HepG2 (cell line): ENCODE measurements at regions of chr17 and their contacts with region 1.

Region 1: DNA sequence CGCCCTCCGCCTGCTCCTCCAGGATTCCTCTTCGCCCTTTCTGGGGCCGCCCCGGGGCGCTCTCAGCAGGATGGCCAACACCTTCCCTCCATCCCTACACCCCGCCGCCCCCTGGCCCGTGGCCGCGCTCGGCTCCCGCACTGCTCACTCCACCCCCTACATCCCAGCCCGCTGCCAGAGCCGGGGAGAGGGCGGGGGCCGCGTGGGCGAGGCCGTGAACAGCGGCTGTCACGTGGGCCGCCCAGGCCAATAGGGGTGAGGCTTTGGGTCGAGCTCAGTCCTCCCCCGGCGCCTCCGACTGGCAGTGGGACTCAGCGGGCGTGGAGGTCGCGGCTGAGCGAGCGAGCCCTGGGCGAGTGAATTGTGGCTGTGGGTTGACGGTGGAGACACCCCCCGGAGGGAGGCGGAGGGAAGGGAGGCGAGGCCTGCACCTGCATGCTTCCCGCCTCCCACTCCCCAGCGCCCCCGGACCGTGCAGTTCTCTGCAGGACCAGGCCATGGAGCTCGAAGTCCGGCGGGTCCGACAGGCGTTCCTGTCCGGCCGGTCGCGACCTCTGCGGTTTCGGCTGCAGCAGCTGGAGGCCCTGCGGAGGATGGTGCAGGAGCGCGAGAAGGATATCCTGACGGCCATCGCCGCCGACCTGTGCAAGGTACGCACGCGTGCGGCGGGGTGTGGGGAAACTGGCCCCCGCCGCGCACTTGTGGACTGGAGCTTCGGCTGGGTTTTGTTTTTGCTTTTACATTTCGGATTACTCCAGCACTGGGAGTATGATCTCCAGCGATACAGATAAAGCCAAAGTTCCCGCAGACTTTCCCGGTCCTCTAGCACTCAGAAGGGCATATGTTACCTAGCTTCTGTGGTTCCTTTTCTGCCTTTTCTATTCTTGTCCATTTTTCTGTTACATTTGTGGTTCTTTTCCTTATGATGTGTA is at the start of gene ALDH3A2:
- DNase-seq: peak; percentile 95
- ATAC-seq: peak; percentile 94
- H3K4me3 ChIP-seq: peak within 1 kb of the TSS; percentile 86 to 89 (median 86)
- H3K27ac ChIP-seq: peak within 1 kb of the TSS; percentile 88
- H3K4me1 ChIP-seq: peaks cover 71% of the 10 kb centered on the region
- H3K27me3 ChIP-seq: no peaks in the 10 kb centered on the region; a peak in 1 of 5 replicates
- CTCF ChIP-seq: peak; percentile 82
- EP300 ChIP-seq: peak; percentile 59 to 88; a peak in 3 of 4 replicates
- POLR2A ChIP-seq: peak; percentile 48 to 94; a peak in 3 of 4 replicates
- RAD21 ChIP-seq: peak; percentile 94
- total RNA-seq, gene ALDH3A2: 180 and 245 TPM in 2 replicates

Region 2: DNA sequence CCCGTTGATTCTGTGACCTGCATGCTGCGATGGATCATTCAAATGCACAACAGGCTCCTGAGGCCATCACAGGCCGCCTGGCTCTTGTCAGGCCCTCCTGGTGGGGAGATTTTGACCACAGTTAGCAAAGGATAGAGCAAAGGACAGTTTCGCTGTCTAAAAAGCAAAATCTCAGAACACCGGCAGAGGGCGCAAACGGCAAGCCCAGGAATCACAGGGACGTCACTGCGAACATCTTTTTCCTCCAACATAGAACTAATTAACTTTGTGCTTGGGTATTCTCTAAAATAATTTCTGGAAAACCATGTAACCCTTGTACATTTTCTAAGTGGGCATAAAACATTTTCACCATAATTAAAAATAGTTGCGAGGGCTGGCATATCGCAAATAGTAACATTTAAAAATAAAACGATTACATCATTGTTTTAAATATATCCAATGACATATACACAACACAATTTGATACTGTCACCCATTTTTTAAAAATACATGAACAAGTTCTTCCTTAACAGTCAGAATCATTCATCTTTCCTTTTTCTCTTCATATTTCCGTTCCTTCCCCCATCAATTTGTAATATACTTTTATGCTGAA is 134.7 kb before region 1 on chr17:
- CTCF ChIA-PET with region 1: no interaction called
- POLR2A ChIA-PET with region 1: interaction called, 7 read pairs
- in situ Hi-C with region 1: no loop called
- intact Hi-C with region 1: loop called (anchors 2 kb)
- DNase-seq: peak; percentile 68
- ATAC-seq: peak; percentile 87
- H3K4me3 ChIP-seq: no peak overlapping the region
- H3K27ac ChIP-seq: no peak overlapping the region
- H3K4me1 ChIP-seq: peaks cover 58% of the 10 kb centered on the region
- H3K27me3 ChIP-seq: no peaks in the 10 kb centered on the region
- CTCF ChIP-seq: peak; percentile 92
- EP300 ChIP-seq: no peak
- POLR2A ChIP-seq: no peak
- RAD21 ChIP-seq: peak; percentile 90

Region 3: GRCh38 chr17:19590912-19591551 is 57.7 kb before region 1 on chr17:
- CTCF ChIA-PET with region 1: no interaction called
- POLR2A ChIA-PET with region 1: interaction called, 3 read pairs
- in situ Hi-C with region 1: no loop called
- intact Hi-C with region 1: loop called (anchors 10 kb)
- DNase-seq: peak; percentile 10
- ATAC-seq: peak; percentile 66
- H3K4me3 ChIP-seq: no peak overlapping the region
- H3K27ac ChIP-seq: no peak overlapping the region
- H3K4me1 ChIP-seq: peaks cover 14% of the 10 kb centered on the region
- H3K27me3 ChIP-seq: no peaks in the 10 kb centered on the region
- CTCF ChIP-seq: peak; percentile 55
- EP300 ChIP-seq: no peak
- POLR2A ChIP-seq: no peak
- RAD21 ChIP-seq: no peak

Region 4: GRCh38 chr17:19678581-19679453 is 30.1 kb after region 1 on chr17:
- CTCF ChIA-PET with region 1: no interaction called
- POLR2A ChIA-PET with region 1: interaction called, 133 read pairs
- in situ Hi-C with region 1: no loop called
- intact Hi-C with region 1: no loop called
- DNase-seq: no peak
- ATAC-seq: peak; percentile 11; the same call in 2 of the 3 replicates
- H3K4me3 ChIP-seq: no peak overlapping the region
- H3K27ac ChIP-seq: peak overlapping the region; percentile 9
- H3K4me1 ChIP-seq: 0 out of 2 replicates have a peak, but pooled peaks cover 5% of the 10 kb centered on the region
- H3K27me3 ChIP-seq: no peaks in the 10 kb centered on the region; a peak in 1 of 5 replicates
- CTCF ChIP-seq: no peak
- EP300 ChIP-seq: no peak
- POLR2A ChIP-seq: peak in 1 of 2 experiments; percentile 28; a peak in 1 of 4 replicates
- RAD21 ChIP-seq: no peak

Region 5: GRCh38 chr17:19728079-19728495 is 79.3 kb after region 1 on chr17:
- CTCF ChIA-PET with region 1: no interaction called
- POLR2A ChIA-PET with region 1: interaction called, 21 read pairs
- in situ Hi-C with region 1: no loop called
- intact Hi-C with region 1: loop called (anchors 10 kb)
- DNase-seq: peak; percentile 44
- ATAC-seq: peak; percentile 84
- H3K4me3 ChIP-seq: peak overlapping the region in 1 of 3 experiments; percentile 41; a peak in 1 of 6 replicates
- H3K27ac ChIP-seq: peak overlapping the region; percentile 46
- H3K4me1 ChIP-seq: peaks cover 55% of the 10 kb centered on the region
- H3K27me3 ChIP-seq: no peaks in the 10 kb centered on the region
- CTCF ChIP-seq: 0 out of 2 replicates have a peak, but pooled peaks have one; percentile 1
- EP300 ChIP-seq: 0 out of 4 replicates have a peak, but pooled peaks of 1 of the 2 experiments have one; percentile 17
- POLR2A ChIP-seq: no peak
- RAD21 ChIP-seq: no peak

Region 6: DNA sequence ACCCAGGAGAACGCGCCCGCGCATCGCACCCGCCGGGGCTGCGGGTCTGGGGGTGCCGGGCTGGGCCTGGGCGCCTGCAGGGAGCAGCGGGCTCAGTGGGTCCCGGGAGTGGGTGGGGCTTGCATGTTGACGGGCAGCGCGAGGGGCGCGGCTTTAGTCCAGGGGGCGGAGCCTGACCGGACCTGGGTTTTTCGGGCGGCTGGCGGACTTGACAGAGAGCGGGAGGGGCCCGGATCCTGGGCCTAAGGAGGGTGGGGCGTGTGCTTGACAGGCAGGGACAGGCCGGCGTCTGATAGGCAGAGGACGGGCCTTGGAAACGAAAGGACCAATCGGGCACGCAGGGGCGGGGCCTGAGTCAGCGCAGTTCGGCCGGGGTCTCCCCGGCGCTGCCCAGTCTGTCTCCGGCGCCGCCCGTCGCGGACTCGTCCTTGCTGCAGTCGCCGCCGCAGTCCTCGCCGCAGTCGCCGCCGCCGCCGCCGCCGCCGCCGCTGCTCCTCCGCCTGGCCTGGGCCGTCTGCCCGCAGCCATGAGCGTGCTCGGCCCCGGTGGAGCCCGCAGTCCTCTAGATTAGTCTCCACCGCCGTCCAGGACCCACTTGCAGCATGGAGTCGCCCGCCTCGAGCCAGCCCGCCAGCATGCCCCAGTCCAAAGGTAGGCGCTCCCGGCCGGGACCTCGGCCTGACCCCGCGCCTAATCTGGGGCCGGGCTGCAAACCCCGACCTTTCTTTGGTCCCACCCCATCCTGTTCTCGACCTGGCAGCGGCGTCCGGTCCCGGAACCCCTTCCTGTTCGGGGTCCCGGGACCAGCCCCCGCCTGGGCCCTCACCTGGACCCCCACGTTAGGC is 1635.8 kb after region 1 on chr17 and contains the start of gene MAP2K3:
- CTCF ChIA-PET with region 1: no interaction called
- POLR2A ChIA-PET with region 1: no interaction called
- in situ Hi-C with region 1: no loop called
- intact Hi-C with region 1: no loop called
- DNase-seq: peak; percentile 97
- ATAC-seq: peak; percentile 70
- H3K4me3 ChIP-seq: peak within 1 kb of the TSS; percentile 82 to 96 (median 95)
- H3K27ac ChIP-seq: peak within 1 kb of the TSS; percentile 90
- H3K4me1 ChIP-seq: peaks cover 53% of the 10 kb centered on the region
- H3K27me3 ChIP-seq: peaks cover 2 to 19% of the 10 kb centered on the region in 2 experiments; a peak in 4 of 5 replicates
- CTCF ChIP-seq: 0 out of 2 replicates have a peak, but pooled peaks have one; percentile 11
- EP300 ChIP-seq: no peak
- POLR2A ChIP-seq: peak; percentile 93 to 99
- RAD21 ChIP-seq: peak; percentile 29
- total RNA-seq, gene MAP2K3: 20.5 and 39.8 TPM in 2 replicates